ENCODE measurements at regions of chr22 and their contacts with region 1.

Region 1: DNA sequence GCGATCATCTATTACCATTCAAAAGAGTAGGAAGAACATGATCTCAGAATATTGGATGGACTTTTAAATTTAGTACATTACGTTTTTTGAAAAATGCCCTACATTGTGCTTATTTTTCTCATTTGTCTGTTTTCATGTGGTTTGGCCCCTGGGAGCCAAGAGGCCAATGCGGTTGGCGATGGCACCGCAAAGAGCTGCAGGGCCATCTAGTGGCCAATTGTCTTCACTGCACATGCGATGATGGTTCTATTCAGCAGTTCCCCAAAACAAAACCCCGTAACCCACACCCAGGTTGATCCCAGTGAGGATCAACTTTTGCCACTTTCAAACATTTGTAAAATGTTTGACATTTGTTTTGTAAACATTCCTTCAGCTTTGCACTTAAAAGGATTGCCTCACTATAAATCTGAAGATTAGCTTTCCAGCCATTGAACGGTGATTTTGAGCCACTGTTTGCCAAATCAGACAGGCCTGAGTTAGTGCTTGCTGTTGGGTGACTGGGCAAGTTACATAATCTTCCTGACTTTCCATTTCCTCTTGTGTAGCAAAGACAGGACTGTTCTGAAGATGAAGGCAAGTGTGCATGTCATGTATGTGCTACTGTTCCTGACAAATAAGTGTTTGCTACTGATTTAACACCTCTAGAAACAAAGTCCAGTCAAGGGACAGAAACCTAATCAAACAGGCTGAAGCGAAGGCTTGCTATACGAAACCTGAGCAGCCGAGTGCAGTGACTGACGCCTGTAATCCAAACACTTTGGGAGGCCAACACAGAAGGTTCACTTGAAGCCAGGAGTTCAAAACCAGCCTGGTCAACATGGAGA is 29.2 kb upstream of the XBP1 start:
- DNase-seq: peak; percentile 59 to 81 (median 67)
- H3K4me3 ChIP-seq: no peak overlapping the region
- H3K4me3 Mint-ChIP-seq: peak overlapping the region in 3 of 7 donors; percentile 37 to 70 (median 49)
- H3K27ac ChIP-seq: no peak overlapping the region
- H3K27ac Mint-ChIP-seq: peak overlapping the region in 3 of 8 donors; percentile 3 to 52 (median 40)
- H3K4me1 ChIP-seq: peaks cover 13% of the 10 kb centered on the region
- H3K4me1 Mint-ChIP-seq: peaks cover 18 to 45% (median 23%) of the 10 kb centered on the region in 3 donors
- H3K27me3 ChIP-seq: no peaks in the 10 kb centered on the region
- H3K27me3 Mint-ChIP-seq: peaks cover 0 to 1% of the 10 kb centered on the region in 2 donors

Region 2: DNA sequence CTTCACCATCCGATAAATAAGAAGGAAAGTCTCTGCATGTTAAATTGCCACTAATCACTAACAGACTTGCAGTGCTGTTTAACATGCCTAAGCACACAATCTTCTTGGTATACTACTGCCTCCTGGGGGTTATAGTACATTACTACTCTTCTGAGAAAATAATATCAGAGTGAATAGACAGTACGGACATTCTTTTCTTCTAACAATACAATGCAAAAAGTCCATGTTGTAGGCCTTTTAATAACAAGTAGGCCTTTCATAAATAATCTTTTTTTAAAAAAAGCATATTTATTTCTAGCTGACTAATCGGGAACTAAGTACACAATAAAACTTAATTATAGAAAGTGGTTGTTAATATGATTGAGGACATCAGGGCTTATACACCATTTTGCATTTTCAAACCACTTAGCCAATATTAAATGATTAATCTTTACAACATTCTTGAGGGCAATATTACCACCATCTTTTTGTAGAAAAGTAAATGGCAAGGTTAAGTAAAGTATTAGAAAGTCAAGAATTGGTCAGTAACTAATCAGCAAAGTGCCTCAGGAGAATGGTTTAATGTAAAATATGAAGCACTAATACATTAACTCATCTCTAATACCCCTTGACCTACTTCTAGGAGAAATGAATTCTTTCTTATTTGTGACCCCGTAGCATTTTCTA is 234.6 kb before region 1 on chr22:
- CTCF ChIA-PET with region 1: interaction called, 50 read pairs
- POLR2A ChIA-PET with region 1: no interaction called
- DNase-seq: peak in 2 of 5 donors; percentile 13 to 34
- H3K4me3 ChIP-seq: no peak overlapping the region
- H3K4me3 Mint-ChIP-seq: no peak overlapping the region
- H3K27ac ChIP-seq: no peak overlapping the region
- H3K27ac Mint-ChIP-seq: no peak overlapping the region
- H3K4me1 ChIP-seq: no peaks in the 10 kb centered on the region
- H3K4me1 Mint-ChIP-seq: no peaks in the 10 kb centered on the region
- H3K27me3 ChIP-seq: peaks cover 4% of the 10 kb centered on the region
- H3K27me3 Mint-ChIP-seq: peaks cover 3 to 34% of the 10 kb centered on the region in 2 donors

Region 3: DNA sequence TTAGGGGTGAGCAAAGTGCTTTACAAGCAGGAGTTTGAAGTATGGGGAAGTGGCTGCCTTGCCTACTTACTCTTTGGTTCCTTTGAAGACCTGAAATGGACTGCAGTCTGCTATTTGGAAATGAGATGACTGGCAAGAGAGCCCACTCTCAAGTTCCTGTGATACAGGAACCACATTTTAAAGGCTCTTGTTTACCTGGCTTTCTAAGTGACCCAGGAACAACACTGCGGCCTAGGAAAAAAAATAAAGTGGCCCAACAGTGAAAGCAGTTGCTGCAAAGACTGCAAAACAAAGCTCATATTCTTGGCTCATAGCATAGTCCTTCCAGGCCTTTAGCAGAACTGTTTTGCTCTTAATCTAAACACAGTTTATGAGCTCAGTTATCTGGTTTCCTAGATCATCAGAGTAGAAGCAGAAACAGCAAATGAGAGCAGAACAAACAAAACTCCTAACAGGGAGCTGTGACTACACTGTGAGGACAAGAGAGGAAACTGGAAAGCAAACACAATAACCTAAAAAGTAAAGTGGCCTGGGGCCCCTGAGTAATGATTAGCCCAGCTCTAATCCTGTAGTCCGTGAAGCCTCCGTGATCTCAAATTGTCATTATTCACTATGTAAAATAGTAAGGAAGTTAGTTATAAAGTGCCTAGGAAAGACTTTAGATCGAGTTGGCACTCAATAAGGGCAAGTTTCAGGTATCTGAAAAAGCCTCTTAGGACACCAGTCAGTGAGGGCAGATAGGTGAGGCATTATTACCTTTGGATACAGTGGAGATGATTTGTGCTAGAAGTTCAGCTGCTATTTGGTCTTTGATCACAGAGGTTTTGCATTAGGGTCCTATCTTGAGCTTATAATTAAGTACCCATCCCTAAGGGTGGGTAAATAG is 45.5 kb before region 1 on chr22:
- CTCF ChIA-PET with region 1: interaction called, 22 read pairs
- POLR2A ChIA-PET with region 1: no interaction called
- DNase-seq: no peak
- H3K4me3 ChIP-seq: no peak overlapping the region
- H3K4me3 Mint-ChIP-seq: no peak overlapping the region
- H3K27ac ChIP-seq: no peak overlapping the region
- H3K27ac Mint-ChIP-seq: peak overlapping the region in 4 of 8 donors; percentile 21 to 51 (median 28)
- H3K4me1 ChIP-seq: no peaks in the 10 kb centered on the region
- H3K4me1 Mint-ChIP-seq: peaks cover 21 to 25% (median 24%) of the 10 kb centered on the region in 3 donors
- H3K27me3 ChIP-seq: no peaks in the 10 kb centered on the region
- H3K27me3 Mint-ChIP-seq: no peaks in the 10 kb centered on the region

Region 4: DNA sequence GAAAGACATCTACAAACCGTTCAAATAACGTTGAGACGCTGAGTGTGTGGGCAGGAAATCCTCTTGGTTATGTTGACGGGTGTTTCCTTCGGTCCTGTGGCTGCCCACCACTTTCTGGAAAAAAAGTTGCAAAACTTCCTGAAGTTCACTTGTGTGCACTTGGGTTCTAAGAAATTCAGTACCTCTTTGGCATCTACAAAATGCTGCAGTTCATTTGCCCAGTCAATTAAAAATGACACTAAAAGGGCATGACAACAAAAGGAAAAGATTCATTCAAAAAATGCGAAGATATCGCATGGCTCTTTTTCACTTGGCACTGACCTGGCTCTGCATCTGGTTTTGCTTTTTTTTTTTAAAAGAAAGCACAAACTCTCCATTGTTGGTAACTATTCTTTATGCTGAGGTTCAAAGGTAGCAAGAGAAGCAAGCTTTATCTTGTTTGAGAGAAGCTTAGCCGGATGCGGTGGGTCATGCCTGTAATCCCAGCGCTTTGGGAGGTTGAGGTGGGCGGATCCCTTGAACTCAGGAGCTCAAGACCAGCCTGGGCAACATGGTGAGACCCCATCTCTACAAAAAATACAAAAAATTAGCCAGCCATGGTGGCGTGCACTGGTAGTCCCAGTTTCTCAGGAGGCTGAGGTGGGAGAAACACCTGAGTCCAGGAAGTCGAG is 18.6 kb before region 1 on chr22:
- CTCF ChIA-PET with region 1: interaction called, 16 read pairs
- POLR2A ChIA-PET with region 1: no interaction called
- DNase-seq: peak; percentile 16 to 68 (median 62)
- H3K4me3 ChIP-seq: peak overlapping the region; percentile 13
- H3K4me3 Mint-ChIP-seq: peak overlapping the region; percentile 74 to 89 (median 88)
- H3K27ac ChIP-seq: peak overlapping the region; percentile 3
- H3K27ac Mint-ChIP-seq: peak overlapping the region; percentile 73 to 97 (median 92)
- H3K4me1 ChIP-seq: peaks cover 74% of the 10 kb centered on the region
- H3K4me1 Mint-ChIP-seq: peaks cover 68 to 86% (median 81%) of the 10 kb centered on the region in 3 donors
- H3K27me3 ChIP-seq: no peaks in the 10 kb centered on the region
- H3K27me3 Mint-ChIP-seq: no peaks in the 10 kb centered on the region

Region 5: DNA sequence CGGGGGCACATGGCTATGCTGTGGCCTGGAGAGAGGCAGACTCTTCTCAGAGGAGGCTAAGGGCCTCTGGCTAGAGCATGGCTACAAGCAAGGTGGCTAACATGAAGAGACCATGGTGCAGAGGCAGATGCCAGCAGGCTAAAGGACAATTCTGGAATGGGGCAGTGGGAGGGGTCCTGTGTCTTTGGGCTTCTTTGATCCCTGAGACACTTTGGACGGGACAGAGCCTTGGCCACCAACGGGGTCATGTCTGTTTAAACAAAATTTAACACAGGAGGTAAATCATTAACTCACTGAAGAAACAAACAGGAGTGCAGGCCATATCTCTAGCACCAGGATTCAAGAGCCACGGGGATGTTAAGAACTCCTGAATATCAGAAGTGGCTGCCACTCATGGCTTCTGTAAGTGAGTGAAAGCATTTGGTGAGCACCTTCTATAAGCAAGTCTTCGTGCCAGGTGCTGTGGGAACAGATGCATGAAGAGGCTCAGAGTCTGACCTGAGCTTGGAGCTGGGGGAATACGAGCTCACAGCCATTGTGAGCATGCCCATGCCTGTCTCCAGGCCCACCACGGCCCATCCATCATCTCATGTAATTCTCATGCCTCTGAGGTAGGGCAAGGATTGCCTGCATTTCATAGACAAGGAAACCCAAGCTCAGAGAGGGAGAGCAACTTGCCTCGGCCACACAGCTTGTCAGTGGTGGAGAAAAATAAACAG is 35.5 kb after region 1 on chr22:
- CTCF ChIA-PET with region 1: no interaction called
- POLR2A ChIA-PET with region 1: no interaction called
- DNase-seq: no peak
- H3K4me3 ChIP-seq: no peak overlapping the region
- H3K4me3 Mint-ChIP-seq: no peak overlapping the region
- H3K27ac ChIP-seq: no peak overlapping the region
- H3K27ac Mint-ChIP-seq: no peak overlapping the region
- H3K4me1 ChIP-seq: no peaks in the 10 kb centered on the region
- H3K4me1 Mint-ChIP-seq: no peaks in the 10 kb centered on the region
- H3K27me3 ChIP-seq: no peaks in the 10 kb centered on the region
- H3K27me3 Mint-ChIP-seq: peaks cover 13% of the 10 kb centered on the region in 2 donors

Region 6: DNA sequence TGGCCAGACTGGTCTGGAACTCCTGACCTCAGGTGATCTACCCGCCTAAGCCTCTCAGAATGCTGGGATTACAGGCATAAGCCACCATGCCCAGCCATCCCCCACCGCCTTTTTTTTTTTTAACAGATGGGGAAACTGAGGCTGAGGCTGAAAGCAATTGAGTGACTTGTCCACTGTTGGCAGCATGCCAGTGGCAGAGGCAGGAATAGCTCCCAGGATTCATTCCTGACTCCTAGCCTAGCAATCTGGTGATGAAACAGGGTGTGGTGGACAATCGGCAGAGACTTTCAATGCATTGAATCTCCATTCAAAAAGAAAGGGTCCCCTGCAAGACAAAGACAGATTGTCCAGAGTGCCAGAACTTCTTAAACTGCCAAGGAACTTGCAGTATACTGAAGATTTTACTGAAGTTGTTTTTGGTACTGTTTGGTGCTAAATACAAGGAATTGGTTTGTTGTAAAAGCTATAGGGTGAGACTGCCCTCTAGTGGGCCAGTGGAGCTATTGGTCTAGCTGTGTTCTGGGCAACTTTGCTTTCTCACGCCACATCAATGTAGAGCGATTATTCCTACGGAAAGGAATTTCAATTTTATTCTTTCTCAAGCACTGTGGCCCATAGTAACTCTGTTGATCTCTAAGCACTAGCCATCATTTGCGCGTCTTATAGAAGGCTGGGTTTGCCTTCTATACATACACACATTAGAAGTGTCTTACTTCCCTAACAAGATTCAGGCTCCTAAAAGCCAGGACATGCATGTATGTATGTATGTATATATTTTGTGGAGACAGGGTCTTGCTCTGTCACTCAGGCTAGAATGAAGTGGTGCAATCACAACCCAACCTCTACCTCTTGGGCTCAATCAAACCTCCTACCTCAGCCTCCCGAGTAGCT is 211.1 kb after region 1 on chr22:
- CTCF ChIA-PET with region 1: interaction called, 15 read pairs
- POLR2A ChIA-PET with region 1: no interaction called
- DNase-seq: peak; percentile 44 to 66 (median 55)
- H3K4me3 ChIP-seq: no peak overlapping the region
- H3K4me3 Mint-ChIP-seq: no peak overlapping the region
- H3K27ac ChIP-seq: no peak overlapping the region
- H3K27ac Mint-ChIP-seq: no peak overlapping the region
- H3K4me1 ChIP-seq: no peaks in the 10 kb centered on the region
- H3K4me1 Mint-ChIP-seq: no peaks in the 10 kb centered on the region
- H3K27me3 ChIP-seq: peaks cover 5% of the 10 kb centered on the region
- H3K27me3 Mint-ChIP-seq: peaks cover 3 to 4% of the 10 kb centered on the region in 2 donors